ENCODE measurements at regions of chr20 and their contacts with region 1.

Region 1: GRCh38 chr20:59850018-59850641 is 83.3 kb downstream of the SYCP2 start:
- DNase-seq: no peak
- ATAC-seq: no peak
- H3K4me3 ChIP-seq: no peak overlapping the region
- H3K27ac ChIP-seq: no peak overlapping the region
- H3K4me1 ChIP-seq: no peaks in the 10 kb centered on the region
- H3K27me3 ChIP-seq: no peaks in the 10 kb centered on the region
- CTCF ChIP-seq: peak; percentile 9 to 57 (median 29)
- POLR2A ChIP-seq: no peak

Region 2: DNA sequence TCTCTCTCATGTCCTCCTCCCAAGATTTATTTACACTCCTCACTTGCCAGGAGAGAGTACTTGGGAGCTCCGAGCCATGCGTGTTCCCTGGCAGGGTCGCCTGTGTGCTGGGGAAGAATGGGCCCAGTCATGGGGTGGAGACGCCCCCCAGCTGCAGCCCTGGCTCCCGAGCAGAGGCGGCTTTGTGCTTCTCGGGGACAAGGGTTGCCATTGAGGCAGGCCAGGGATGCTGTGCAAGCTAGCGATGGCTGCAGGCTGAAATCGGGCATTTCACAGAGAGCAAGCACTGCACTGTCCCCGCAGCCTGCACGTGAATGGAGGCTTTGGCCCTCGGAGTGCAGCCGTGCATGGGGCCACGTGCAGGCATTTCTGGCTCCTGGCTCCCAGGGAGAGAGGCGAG is 222.0 kb before region 1 on chr20:
- in situ Hi-C with region 1: no loop called
- intact Hi-C with region 1: no loop called
- DNase-seq: no peak
- ATAC-seq: no peak
- H3K4me3 ChIP-seq: no peak overlapping the region
- H3K27ac ChIP-seq: no peak overlapping the region
- H3K4me1 ChIP-seq: no peaks in the 10 kb centered on the region
- H3K27me3 ChIP-seq: peaks cover 0 to 3% (median 0%) of the 10 kb centered on the region in 3 donors
- CTCF ChIP-seq: no peak
- POLR2A ChIP-seq: no peak

Region 3: GRCh38 chr20:59782986-59783640 is 67.0 kb before region 1 on chr20:
- in situ Hi-C with region 1: no loop called
- intact Hi-C with region 1: loop called (anchors 1 kb)
- DNase-seq: no peak
- ATAC-seq: no peak
- H3K4me3 ChIP-seq: no peak overlapping the region
- H3K27ac ChIP-seq: no peak overlapping the region
- H3K4me1 ChIP-seq: no peaks in the 10 kb centered on the region
- H3K27me3 ChIP-seq: no peaks in the 10 kb centered on the region
- CTCF ChIP-seq: peak; percentile 29 to 79 (median 60)
- POLR2A ChIP-seq: no peak

Region 4: GRCh38 chr20:59789686-59790085 is 60.4 kb before region 1 on chr20:
- in situ Hi-C with region 1: loop called in 1 of 4 experiments (anchors 5 kb)
- intact Hi-C with region 1: no loop called
- DNase-seq: no peak
- ATAC-seq: no peak
- H3K4me3 ChIP-seq: no peak overlapping the region
- H3K27ac ChIP-seq: no peak overlapping the region
- H3K4me1 ChIP-seq: no peaks in the 10 kb centered on the region
- H3K27me3 ChIP-seq: no peaks in the 10 kb centered on the region
- CTCF ChIP-seq: no peak
- POLR2A ChIP-seq: no peak

Measured in gastrocnemius medialis (tissue), 4 donors.